CD8-positive, alpha-beta T cell (primary cell): ENCODE measurements at regions of chr6 and their contacts with region 1.

Region 1: GRCh38 chr6:128520436-128521281 is at the start of gene PTPRK:
- DNase-seq: peak; percentile 69 to 92 (median 89)
- ATAC-seq: peak; percentile 85
- H3K4me3 ChIP-seq: peak within 1 kb of the TSS; percentile 66 to 92
- H3K4me3 Mint-ChIP-seq: peak within 1 kb of the TSS; percentile 97
- H3K27ac ChIP-seq: peak within 1 kb of the TSS; percentile 17 to 61
- H3K27ac Mint-ChIP-seq: peak within 1 kb of the TSS; percentile 94
- H3K4me1 ChIP-seq: peaks cover 4% of the 10 kb centered on the region
- H3K4me1 Mint-ChIP-seq: peaks cover 19% of the 10 kb centered on the region
- H3K27me3 ChIP-seq: peaks cover 5 to 18% of the 10 kb centered on the region in 2 experiments
- H3K27me3 Mint-ChIP-seq: peaks cover 41% of the 10 kb centered on the region
- CTCF ChIP-seq: peak; percentile 44
- total RNA-seq, gene PTPRK: 17.2 to 18.6 TPM

Region 2: GRCh38 chr6:127516666-127517273 is 1003.9 kb before region 1 on chr6:
- CTCF ChIA-PET with region 1: no interaction called
- POLR2A ChIA-PET with region 1: no interaction called
- intact Hi-C with region 1: loop called (anchors 10 kb)
- DNase-seq: peak in 6 of 9 experiments; percentile 23 to 69 (median 40)
- ATAC-seq: peak; percentile 28
- H3K4me3 ChIP-seq: peak overlapping the region; percentile 64 to 65
- H3K4me3 Mint-ChIP-seq: peak overlapping the region; percentile 86
- H3K27ac ChIP-seq: no peak overlapping the region
- H3K27ac Mint-ChIP-seq: peak overlapping the region; percentile 24
- H3K4me1 ChIP-seq: peaks cover 30% of the 10 kb centered on the region
- H3K4me1 Mint-ChIP-seq: peaks cover 30% of the 10 kb centered on the region
- H3K27me3 ChIP-seq: peaks cover 12 to 27% of the 10 kb centered on the region in 2 experiments
- H3K27me3 Mint-ChIP-seq: peaks cover 36% of the 10 kb centered on the region
- CTCF ChIP-seq: peak; percentile 74

Region 3: DNA sequence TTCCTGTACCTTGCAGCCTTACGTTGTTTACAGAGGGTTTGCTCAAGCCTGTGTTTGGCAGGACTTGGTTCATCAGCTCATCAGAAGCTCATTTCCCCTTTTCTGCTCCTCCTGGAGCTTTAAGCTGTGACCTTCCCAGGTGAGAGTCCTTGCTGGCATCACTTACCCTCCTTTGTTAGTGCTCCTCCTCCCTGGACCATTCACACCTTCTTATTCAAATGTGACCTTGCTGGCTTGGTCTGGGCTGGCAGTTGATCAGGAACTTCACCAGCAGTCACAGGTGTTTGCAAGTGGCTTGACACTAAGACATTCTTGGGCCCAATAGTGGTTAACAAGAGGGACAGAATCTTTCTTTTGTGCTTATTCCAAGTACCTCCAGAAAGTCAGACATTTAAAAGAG is 794.8 kb before region 1 on chr6:
- CTCF ChIA-PET with region 1: no interaction called
- POLR2A ChIA-PET with region 1: no interaction called
- intact Hi-C with region 1: loop called in 1 of 2 experiments (anchors 2 kb)
- DNase-seq: no peak
- ATAC-seq: no peak
- H3K4me3 ChIP-seq: no peak overlapping the region
- H3K4me3 Mint-ChIP-seq: no peak overlapping the region
- H3K27ac ChIP-seq: no peak overlapping the region
- H3K27ac Mint-ChIP-seq: peak overlapping the region; percentile 67
- H3K4me1 ChIP-seq: peaks cover 21% of the 10 kb centered on the region
- H3K4me1 Mint-ChIP-seq: peaks cover 83% of the 10 kb centered on the region
- H3K27me3 ChIP-seq: no peaks in the 10 kb centered on the region
- H3K27me3 Mint-ChIP-seq: no peaks in the 10 kb centered on the region
- CTCF ChIP-seq: no peak

Region 4: DNA sequence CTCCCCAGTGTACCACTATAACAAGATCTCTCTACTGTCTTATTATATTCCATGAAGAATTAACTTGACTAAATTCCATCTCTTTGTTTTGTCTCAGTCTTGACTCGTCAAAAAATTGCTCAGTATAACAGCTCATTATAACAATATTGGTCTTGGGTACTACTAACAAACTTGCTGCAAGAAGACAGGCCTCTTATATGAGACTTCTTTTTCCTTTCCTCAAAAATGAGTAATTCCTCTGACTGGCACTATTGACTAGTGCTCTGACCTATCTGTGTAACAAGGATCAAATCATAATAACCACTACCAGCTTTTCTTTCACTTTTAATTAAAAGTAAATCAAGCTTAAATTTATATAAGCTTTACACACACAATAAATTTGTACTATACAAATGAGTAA is 528.5 kb before region 1 on chr6:
- CTCF ChIA-PET with region 1: no interaction called
- POLR2A ChIA-PET with region 1: no interaction called
- intact Hi-C with region 1: loop called in 1 of 2 experiments (anchors 10 kb)
- DNase-seq: no peak
- ATAC-seq: peak; percentile 59
- H3K4me3 ChIP-seq: peak overlapping the region in 1 of 2 experiments; percentile 8
- H3K4me3 Mint-ChIP-seq: peak overlapping the region; percentile 73
- H3K27ac ChIP-seq: peak overlapping the region; percentile 5 to 38
- H3K27ac Mint-ChIP-seq: peak overlapping the region; percentile 88
- H3K4me1 ChIP-seq: peaks cover 37% of the 10 kb centered on the region
- H3K4me1 Mint-ChIP-seq: peaks cover 52% of the 10 kb centered on the region
- H3K27me3 ChIP-seq: no peaks in the 10 kb centered on the region
- H3K27me3 Mint-ChIP-seq: no peaks in the 10 kb centered on the region
- CTCF ChIP-seq: no peak

Region 5: GRCh38 chr6:128259730-128260685 is 260.7 kb before region 1 on chr6:
- CTCF ChIA-PET with region 1: no interaction called
- POLR2A ChIA-PET with region 1: no interaction called
- intact Hi-C with region 1: loop called (anchors 10 kb)
- DNase-seq: peak in 2 of 9 experiments; percentile 31 to 63
- ATAC-seq: peak; percentile 77
- H3K4me3 ChIP-seq: peak overlapping the region; percentile 31 to 42
- H3K4me3 Mint-ChIP-seq: peak overlapping the region; percentile 83
- H3K27ac ChIP-seq: peak overlapping the region; percentile 49 to 69
- H3K27ac Mint-ChIP-seq: peak overlapping the region; percentile 89
- H3K4me1 ChIP-seq: peaks cover 18% of the 10 kb centered on the region
- H3K4me1 Mint-ChIP-seq: peaks cover 29% of the 10 kb centered on the region
- H3K27me3 ChIP-seq: no peaks in the 10 kb centered on the region
- H3K27me3 Mint-ChIP-seq: no peaks in the 10 kb centered on the region
- CTCF ChIP-seq: no peak